Activated CD4-positive, alpha-beta memory T cell treated with anti-CD3 and anti-CD28 coated beads for 36 hours (primary cell): ENCODE measurements at regions of chr17 and their contacts with region 1.

Region 1: GRCh38 chr17:78745407-78746088 is 36.5 kb downstream of the CYTH1 start:
- DNase-seq: no peak
- H3K4me3 Mint-ChIP-seq: peak overlapping the region; percentile 45
- H3K27ac Mint-ChIP-seq: peak overlapping the region; percentile 96
- H3K4me1 Mint-ChIP-seq: peaks cover 91% of the 10 kb centered on the region
- H3K27me3 Mint-ChIP-seq: no peaks in the 10 kb centered on the region

Region 2: GRCh38 chr17:78723001-78723796 is 22.3 kb before region 1 on chr17:
- CTCF ChIA-PET with region 1: interaction called, 6 read pairs
- POLR2A ChIA-PET with region 1: interaction called, 12 read pairs
- intact Hi-C with region 1: loop called (anchors 1 kb)
- DNase-seq: no peak
- H3K4me3 Mint-ChIP-seq: no peak overlapping the region
- H3K27ac Mint-ChIP-seq: peak overlapping the region; percentile 89
- H3K4me1 Mint-ChIP-seq: peaks cover 93% of the 10 kb centered on the region
- H3K27me3 Mint-ChIP-seq: no peaks in the 10 kb centered on the region

Region 3: GRCh38 chr17:78769196-78769773 is 23.7 kb after region 1 on chr17:
- CTCF ChIA-PET with region 1: interaction called, 29 read pairs
- POLR2A ChIA-PET with region 1: interaction called, 481 read pairs
- intact Hi-C with region 1: no loop called
- DNase-seq: peak; percentile 62
- H3K4me3 Mint-ChIP-seq: no peak overlapping the region
- H3K27ac Mint-ChIP-seq: no peak overlapping the region
- H3K4me1 Mint-ChIP-seq: peaks cover 42% of the 10 kb centered on the region
- H3K27me3 Mint-ChIP-seq: no peaks in the 10 kb centered on the region

Region 4: DNA sequence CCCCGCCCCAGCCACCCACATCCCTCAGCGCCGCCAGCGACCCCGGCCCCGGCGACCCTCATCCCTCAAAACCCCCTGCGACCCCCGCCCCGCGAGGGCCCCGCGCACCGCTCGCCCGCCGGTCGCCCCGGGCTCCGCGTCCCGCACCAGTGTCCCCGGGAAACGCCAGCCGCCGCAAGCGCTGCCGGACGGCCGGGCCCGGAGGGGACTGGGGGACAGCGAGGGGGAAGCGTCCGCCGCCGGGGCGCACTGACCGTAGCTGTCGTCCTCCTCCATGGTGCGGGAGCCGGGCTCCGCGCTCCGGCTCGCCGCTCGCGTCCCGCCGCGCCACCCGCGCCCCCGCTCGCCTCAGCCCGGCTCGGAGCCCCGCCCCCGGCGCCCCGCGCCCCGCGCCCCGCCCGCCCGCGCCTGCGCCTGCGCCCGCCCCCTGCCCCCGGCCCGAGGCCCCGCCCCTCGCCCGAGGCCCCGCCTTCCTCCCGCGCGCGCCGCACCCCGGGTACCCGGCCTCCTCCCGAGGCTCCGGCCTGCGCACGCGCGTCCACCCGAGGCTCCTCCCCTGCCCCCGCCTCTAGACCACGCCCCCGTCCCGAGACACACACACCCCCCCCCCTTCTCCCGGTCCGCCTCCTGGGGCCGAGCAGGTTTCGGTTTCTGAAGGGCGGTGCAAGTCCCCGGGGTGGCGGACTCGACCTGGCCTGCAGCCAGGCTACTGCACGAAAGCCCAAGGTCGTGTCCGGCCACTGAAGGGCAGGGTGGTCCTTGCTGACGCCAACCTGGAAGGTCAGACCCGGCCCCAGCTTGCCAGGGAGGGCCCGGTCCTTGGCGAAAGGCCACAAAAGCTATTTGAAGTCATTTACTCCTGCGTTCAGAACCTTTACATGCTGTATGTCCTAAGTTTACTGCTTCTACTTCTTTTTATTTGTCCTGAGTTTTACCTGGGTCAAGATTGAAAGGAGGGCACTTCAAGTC is 36.7 kb after region 1 on chr17 and contains the start of gene CYTH1:
- CTCF ChIA-PET with region 1: interaction called, 7 read pairs
- POLR2A ChIA-PET with region 1: interaction called, 481 read pairs
- intact Hi-C with region 1: loop called (anchors 1 kb)
- DNase-seq: peak; percentile 98
- H3K4me3 Mint-ChIP-seq: peak within 1 kb of the TSS; percentile 90
- H3K27ac Mint-ChIP-seq: peak within 1 kb of the TSS; percentile 98
- H3K4me1 Mint-ChIP-seq: peaks cover 48% of the 10 kb centered on the region
- H3K27me3 Mint-ChIP-seq: no peaks in the 10 kb centered on the region
- total RNA-seq, gene CYTH1: 184 to 204 TPM

Region 5: DNA sequence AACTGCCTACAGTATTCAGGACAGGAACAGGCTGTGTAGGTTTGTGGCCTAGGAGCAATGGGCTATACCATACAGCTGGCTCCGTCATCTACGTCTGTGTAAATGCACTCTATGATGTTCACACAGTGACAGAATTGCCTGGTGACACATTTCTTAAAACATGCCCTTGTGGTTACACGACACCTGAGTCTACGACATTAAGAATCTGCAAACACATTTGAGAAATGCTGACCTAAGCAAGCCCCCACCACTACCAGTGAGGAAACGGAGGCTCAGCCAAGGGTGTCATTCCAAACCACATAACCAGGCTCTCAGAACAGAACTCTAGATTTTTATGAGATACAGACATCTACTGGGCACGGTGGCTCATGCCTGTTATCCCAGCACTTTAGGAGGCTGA is 71.6 kb after region 1 on chr17:
- CTCF ChIA-PET with region 1: interaction called, 4 read pairs
- POLR2A ChIA-PET with region 1: interaction called, 6 read pairs
- intact Hi-C with region 1: loop called (anchors 1 kb)
- DNase-seq: peak; percentile 89
- H3K4me3 Mint-ChIP-seq: peak overlapping the region; percentile 2
- H3K27ac Mint-ChIP-seq: peak overlapping the region; percentile 92
- H3K4me1 Mint-ChIP-seq: peaks cover 61% of the 10 kb centered on the region
- H3K27me3 Mint-ChIP-seq: no peaks in the 10 kb centered on the region

Region 6: DNA sequence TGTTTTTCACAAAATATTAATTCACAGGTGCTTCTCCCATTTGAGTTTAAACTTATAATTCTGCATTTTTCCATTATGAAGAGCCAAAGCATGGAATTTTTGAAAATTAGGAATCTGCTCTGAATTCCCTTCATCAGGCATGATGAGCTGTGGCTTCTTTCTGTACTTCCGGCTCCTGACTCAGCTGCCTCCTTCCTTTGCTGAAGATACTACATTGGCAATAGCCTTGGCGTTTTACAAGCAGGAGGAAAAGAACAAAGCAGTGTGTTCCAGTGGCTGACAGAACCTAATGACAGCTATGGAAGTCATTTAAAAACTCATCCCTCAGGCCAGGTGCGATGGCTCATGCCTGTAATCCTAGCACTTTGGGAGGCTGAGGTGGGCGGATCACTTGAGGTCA is 113.5 kb after region 1 on chr17:
- CTCF ChIA-PET with region 1: no interaction called
- POLR2A ChIA-PET with region 1: no interaction called
- intact Hi-C with region 1: no loop called
- DNase-seq: no peak
- H3K4me3 Mint-ChIP-seq: no peak overlapping the region
- H3K27ac Mint-ChIP-seq: no peak overlapping the region
- H3K4me1 Mint-ChIP-seq: no peaks in the 10 kb centered on the region
- H3K27me3 Mint-ChIP-seq: peaks cover 4% of the 10 kb centered on the region